Naive thymus-derived CD8-positive, alpha-beta T cell (primary cell): ENCODE measurements at regions of chr16 and their contacts with region 1.

Region 1: GRCh38 chr16:30407102-30407803 is at the start of gene ZNF771:
- DNase-seq: peak; percentile 65 to 92 (median 80)
- ATAC-seq: peak; percentile 81 to 87
- H3K4me3 Mint-ChIP-seq: peak within 1 kb of the TSS; percentile 88 to 100 (median 97)
- H3K27ac Mint-ChIP-seq: peak within 1 kb of the TSS; percentile 82 to 96 (median 95)
- H3K4me1 Mint-ChIP-seq: peaks cover 18 to 36% (median 29%) of the 10 kb centered on the region in 4 donors
- H3K27me3 Mint-ChIP-seq: peaks cover 0 to 3% (median 0%) of the 10 kb centered on the region in 5 donors
- polyA plus RNA-seq, gene ZNF771: 2.1 to 6.7 (median 3.8) TPM

Region 2: GRCh38 chr16:30395155-30395991 is 11.9 kb before region 1 on chr16 and contains the start of gene ZNF48:
- POLR2A ChIA-PET with region 1: interaction called, 65 read pairs
- DNase-seq: peak in 9 of 10 donors; percentile 20 to 70 (median 56)
- ATAC-seq: peak; percentile 72
- H3K4me3 Mint-ChIP-seq: peak within 1 kb of the TSS; percentile 76 to 94 (median 86)
- H3K27ac Mint-ChIP-seq: peak within 1 kb of the TSS; percentile 69 to 94 (median 88)
- H3K4me1 Mint-ChIP-seq: peaks cover 21 to 49% (median 45%) of the 10 kb centered on the region in 4 donors
- H3K27me3 Mint-ChIP-seq: no peaks in the 10 kb centered on the region
- polyA plus RNA-seq, gene ZNF48: 6.1 to 11.7 (median 7.5) TPM